Left colon (tissue), 2 donors: ENCODE measurements at regions of chr2 and their contacts with region 1.

Region 1: DNA sequence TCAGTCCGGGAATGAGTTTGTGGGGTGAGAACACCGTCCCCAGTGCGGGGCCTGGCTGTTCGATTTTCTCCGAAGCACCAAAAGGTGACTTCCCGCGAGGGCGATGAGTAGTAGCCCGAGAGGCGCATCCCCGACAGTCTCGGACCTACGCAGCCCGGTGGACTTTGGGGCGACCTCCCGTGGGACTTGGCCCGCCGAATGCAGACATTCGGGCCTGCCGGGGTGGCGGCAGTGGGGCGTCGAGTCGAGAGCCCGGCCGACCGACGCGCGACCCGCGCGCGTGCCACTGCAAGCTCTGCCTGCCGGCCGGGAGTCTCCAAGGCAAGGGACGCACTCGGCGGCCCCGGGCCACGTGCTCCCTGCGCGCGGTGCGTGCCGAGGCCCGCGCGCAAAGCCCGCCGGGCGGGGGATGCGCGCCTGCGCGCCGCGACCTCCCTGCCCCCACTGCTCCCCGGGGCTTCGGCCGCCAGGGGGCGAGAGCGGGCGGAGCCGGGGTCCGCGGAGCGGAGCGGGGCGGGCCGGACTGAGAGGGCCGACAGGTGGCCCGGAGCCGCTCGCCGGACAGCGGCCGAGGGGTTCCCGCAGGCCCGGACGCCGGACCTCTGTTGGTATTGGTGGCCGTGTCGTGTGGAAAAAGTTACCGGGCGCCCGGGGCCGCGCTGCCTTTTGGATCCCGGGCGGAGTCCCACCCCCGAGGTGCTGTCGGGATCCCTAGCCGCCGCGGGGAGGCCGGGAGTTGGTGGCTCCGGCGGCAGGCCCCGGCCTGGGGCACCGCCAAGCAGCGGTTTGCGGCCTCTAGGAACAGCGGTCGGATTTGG is 1.9 kb downstream of the PTMA start:
- DNase-seq: peak; percentile 76 to 86
- ATAC-seq: peak; percentile 30

Region 2: GRCh38 chr2:231604685-231605606 is 105.2 kb before region 1 on chr2:
- intact Hi-C with region 1: loop called (anchors 5 to 10 kb)
- DNase-seq: peak; percentile 98 to 99
- ATAC-seq: peak; percentile 88

Region 3: GRCh38 chr2:231612179-231613053 is 97.8 kb before region 1 on chr2:
- intact Hi-C with region 1: loop called (anchors 5 to 10 kb)
- DNase-seq: peak; percentile 93 to 94
- ATAC-seq: peak; percentile 61

Region 4: GRCh38 chr2:231674587-231675338 is 35.4 kb before region 1 on chr2:
- intact Hi-C with region 1: loop called (anchors 2 to 5 kb)
- DNase-seq: peak; percentile 80 to 86
- ATAC-seq: peak; percentile 24